HepG2 (cell line): ENCODE measurements at regions of chr7 and their contacts with region 1.

Region 1: GRCh38 chr7:105024743-105025142 is 10.7 kb downstream of the KMT2E start:
- DNase-seq: peak; percentile 35
- ATAC-seq: peak; percentile 69
- H3K4me3 ChIP-seq: no peak overlapping the region
- H3K27ac ChIP-seq: no peak overlapping the region
- H3K4me1 ChIP-seq: peaks cover 46% of the 10 kb centered on the region
- H3K27me3 ChIP-seq: no peaks in the 10 kb centered on the region
- CTCF ChIP-seq: no peak
- EP300 ChIP-seq: no peak
- POLR2A ChIP-seq: no peak
- RAD21 ChIP-seq: no peak

Region 2: DNA sequence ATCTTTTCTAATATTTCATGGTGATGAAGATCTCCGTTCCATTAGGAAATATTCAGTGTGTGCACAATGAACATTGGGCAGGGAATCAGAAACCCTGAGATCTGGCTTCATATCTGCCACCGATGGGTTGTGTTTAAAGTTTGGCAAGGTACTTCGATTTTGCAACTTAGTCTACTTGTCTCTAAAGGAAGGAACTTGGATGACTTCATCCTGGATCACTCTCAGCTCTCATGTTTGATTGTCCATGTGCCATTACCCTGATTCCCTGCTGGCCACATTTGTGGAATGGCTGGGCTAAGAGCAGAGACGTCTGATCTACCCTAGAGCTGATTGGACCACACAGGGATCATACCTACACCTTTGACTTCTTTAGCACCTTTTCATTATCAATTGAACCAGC is 187.8 kb before region 1 on chr7:
- CTCF ChIA-PET with region 1: no interaction called
- POLR2A ChIA-PET with region 1: no interaction called
- in situ Hi-C with region 1: no loop called
- intact Hi-C with region 1: no loop called
- DNase-seq: no peak
- ATAC-seq: no peak
- H3K4me3 ChIP-seq: no peak overlapping the region
- H3K27ac ChIP-seq: no peak overlapping the region
- H3K4me1 ChIP-seq: no peaks in the 10 kb centered on the region
- H3K27me3 ChIP-seq: 0 out of 5 replicates have a peak, but pooled peaks cover 0 to 3% of the 10 kb centered on the region in 2 experiments
- CTCF ChIP-seq: no peak
- EP300 ChIP-seq: no peak
- POLR2A ChIP-seq: no peak
- RAD21 ChIP-seq: no peak

Region 3: DNA sequence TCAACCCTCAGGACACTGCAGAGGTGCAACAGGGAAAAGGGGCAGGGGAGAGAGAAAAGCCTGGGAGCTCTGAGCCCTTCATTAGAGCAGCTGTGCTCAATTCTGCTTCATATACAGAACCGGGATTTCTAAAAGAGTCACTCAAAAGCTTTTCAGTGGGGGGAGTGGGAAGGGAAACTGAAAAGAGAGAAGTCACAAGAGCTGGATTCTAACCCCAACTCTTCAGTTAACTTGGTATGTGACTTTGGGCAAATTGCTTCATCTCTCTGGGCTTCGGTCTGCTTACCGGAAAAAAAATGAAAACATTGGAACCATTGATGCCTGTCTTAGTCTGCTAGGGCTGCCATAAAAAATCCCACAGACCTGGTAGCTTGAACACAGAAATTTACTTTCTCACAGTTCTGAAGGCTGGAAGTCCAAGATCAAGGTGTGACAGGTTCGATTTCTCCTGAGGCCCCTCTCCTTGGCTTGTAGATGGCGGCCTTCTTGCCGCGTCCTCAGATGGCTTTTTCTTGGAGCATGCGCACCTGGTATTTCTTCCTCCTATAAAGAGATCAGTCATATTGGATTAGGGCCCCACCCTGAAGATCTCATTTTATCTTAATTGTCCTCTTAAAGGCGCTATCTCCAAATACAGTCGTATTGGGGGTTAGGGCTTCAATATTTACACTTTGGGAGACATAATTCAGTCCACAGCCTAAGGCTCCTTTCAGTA is 129.1 kb before region 1 on chr7:
- CTCF ChIA-PET with region 1: no interaction called
- POLR2A ChIA-PET with region 1: no interaction called
- in situ Hi-C with region 1: no loop called
- intact Hi-C with region 1: no loop called
- DNase-seq: no peak
- ATAC-seq: no peak
- H3K4me3 ChIP-seq: no peak overlapping the region
- H3K27ac ChIP-seq: no peak overlapping the region
- H3K4me1 ChIP-seq: peaks cover 9% of the 10 kb centered on the region
- H3K27me3 ChIP-seq: no peaks in the 10 kb centered on the region
- CTCF ChIP-seq: no peak
- EP300 ChIP-seq: no peak
- POLR2A ChIP-seq: no peak
- RAD21 ChIP-seq: no peak

Region 4: DNA sequence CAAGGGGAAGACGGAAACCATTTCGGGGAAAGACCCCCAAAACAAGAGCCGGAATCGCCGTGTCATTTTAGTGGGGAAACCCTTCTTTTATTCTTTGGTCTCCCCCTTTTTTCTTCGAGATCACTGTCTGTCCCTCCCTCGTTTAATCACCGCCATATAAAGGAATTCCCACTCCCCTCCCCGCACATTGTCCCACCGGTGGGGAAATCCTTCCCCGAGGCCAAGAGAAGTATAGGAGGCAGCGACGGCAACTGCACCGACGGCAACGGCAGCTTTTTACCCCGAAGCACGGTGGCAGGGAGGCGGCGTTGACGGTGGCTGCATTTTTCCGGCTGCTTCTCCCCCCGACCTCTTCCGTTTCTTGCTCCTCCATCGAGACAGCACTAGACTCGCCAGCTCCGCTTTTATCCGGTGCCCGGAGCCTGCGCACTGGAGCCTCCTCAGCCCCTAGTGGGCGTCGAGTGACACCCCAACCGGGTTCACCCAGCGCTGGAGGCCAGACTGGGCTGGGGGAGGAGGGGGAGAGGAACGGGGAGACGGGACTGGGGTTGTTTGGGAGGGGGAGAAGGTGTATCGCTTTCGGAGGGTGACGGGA is 11.4 kb before region 1 on chr7:
- CTCF ChIA-PET with region 1: no interaction called
- POLR2A ChIA-PET with region 1: interaction called, 18 read pairs
- in situ Hi-C with region 1: no loop called
- intact Hi-C with region 1: no loop called
- DNase-seq: peak; percentile 88
- ATAC-seq: peak; percentile 84
- H3K4me3 ChIP-seq: peak overlapping the region; percentile 98 to 100 (median 99)
- H3K27ac ChIP-seq: peak overlapping the region; percentile 100
- H3K4me1 ChIP-seq: peaks cover 39% of the 10 kb centered on the region
- H3K27me3 ChIP-seq: no peaks in the 10 kb centered on the region; a peak in 1 of 5 replicates
- CTCF ChIP-seq: peak; percentile 54
- EP300 ChIP-seq: 0 out of 4 replicates have a peak, but pooled peaks of 1 of the 2 experiments have one; percentile 8
- POLR2A ChIP-seq: peak; percentile 82 to 88
- RAD21 ChIP-seq: no peak; the same call in 1 of the 2 replicates

Region 5: GRCh38 chr7:105036217-105037168 is 11.8 kb after region 1 on chr7:
- CTCF ChIA-PET with region 1: no interaction called
- POLR2A ChIA-PET with region 1: no interaction called
- in situ Hi-C with region 1: no loop called
- intact Hi-C with region 1: loop called (anchors 2 kb)
- DNase-seq: no peak
- ATAC-seq: no peak
- H3K4me3 ChIP-seq: no peak overlapping the region
- H3K27ac ChIP-seq: no peak overlapping the region
- H3K4me1 ChIP-seq: no peaks in the 10 kb centered on the region
- H3K27me3 ChIP-seq: no peaks in the 10 kb centered on the region
- CTCF ChIP-seq: no peak
- EP300 ChIP-seq: no peak
- POLR2A ChIP-seq: no peak
- RAD21 ChIP-seq: no peak